B cell (primary cell): ENCODE measurements at regions of chr17 and their contacts with region 1.

Region 1: DNA sequence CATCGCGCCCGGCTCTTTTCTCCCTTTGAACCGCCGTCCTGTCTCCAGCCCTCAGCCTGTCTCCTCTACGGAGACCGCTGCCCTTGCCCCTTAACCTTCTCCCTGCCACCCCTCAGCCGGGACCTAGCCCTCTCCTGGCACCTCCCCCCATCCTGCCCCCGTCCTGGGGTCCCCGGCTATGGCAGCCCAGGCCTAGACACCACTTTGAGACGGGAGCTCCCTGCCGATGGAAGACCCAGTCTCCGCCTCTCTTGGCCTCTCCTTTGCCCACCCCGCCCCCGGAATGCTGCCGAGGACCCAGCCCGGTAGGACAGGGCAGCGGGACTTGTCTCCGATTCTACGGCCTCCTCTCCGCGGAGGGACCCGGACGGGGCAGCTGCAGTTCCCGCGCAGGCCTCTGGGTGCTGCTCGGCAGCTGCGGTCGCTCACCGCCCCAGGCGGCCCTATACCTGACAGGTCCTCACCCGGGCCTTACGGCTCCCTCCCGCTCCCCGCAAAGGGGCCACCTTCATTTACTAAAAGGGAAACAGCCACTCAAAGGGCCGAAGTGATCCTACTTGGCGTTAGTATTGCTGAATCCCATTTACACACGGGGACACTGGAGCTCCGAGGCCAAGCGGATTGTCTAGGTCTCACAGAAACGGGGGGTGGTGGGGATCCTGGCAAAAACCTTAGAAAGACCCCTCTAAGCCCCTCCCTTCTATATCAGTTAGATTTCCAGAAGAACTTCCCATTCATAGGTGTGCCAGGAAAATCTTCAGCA is 32.6 kb upstream of the TAC4 start:
- DNase-seq: peak; percentile 78
- ATAC-seq: peak; percentile 95
- H3K4me3 ChIP-seq: peak overlapping the region in 2 of 5 experiments; percentile 9 to 16
- H3K4me3 Mint-ChIP-seq: peak overlapping the region; percentile 56
- H3K27ac ChIP-seq: no peak overlapping the region
- H3K27ac Mint-ChIP-seq: no peak overlapping the region
- H3K4me1 ChIP-seq: peaks cover 9 to 10% of the 10 kb centered on the region in 2 donors
- H3K4me1 Mint-ChIP-seq: peaks cover 6% of the 10 kb centered on the region
- H3K27me3 ChIP-seq: peaks cover 0 to 46% (median 18%) of the 10 kb centered on the region in 4 experiments
- H3K27me3 Mint-ChIP-seq: peaks cover 53% of the 10 kb centered on the region
- CTCF ChIP-seq: peak; percentile 97

Region 2: GRCh38 chr17:49861150-49861892 is 19.2 kb before region 1 on chr17:
- CTCF ChIA-PET with region 1: interaction called, 4 read pairs
- POLR2A ChIA-PET with region 1: no interaction called
- intact Hi-C with region 1: loop called (anchors 1 kb)
- DNase-seq: peak; percentile 78
- ATAC-seq: peak; percentile 76
- H3K4me3 ChIP-seq: no peak overlapping the region
- H3K4me3 Mint-ChIP-seq: no peak overlapping the region
- H3K27ac ChIP-seq: no peak overlapping the region
- H3K27ac Mint-ChIP-seq: no peak overlapping the region
- H3K4me1 ChIP-seq: no peaks in the 10 kb centered on the region
- H3K4me1 Mint-ChIP-seq: peaks cover 3% of the 10 kb centered on the region
- H3K27me3 ChIP-seq: peaks cover 0 to 31% (median 3%) of the 10 kb centered on the region in 4 experiments
- H3K27me3 Mint-ChIP-seq: peaks cover 34% of the 10 kb centered on the region
- CTCF ChIP-seq: peak; percentile 93

Region 3: DNA sequence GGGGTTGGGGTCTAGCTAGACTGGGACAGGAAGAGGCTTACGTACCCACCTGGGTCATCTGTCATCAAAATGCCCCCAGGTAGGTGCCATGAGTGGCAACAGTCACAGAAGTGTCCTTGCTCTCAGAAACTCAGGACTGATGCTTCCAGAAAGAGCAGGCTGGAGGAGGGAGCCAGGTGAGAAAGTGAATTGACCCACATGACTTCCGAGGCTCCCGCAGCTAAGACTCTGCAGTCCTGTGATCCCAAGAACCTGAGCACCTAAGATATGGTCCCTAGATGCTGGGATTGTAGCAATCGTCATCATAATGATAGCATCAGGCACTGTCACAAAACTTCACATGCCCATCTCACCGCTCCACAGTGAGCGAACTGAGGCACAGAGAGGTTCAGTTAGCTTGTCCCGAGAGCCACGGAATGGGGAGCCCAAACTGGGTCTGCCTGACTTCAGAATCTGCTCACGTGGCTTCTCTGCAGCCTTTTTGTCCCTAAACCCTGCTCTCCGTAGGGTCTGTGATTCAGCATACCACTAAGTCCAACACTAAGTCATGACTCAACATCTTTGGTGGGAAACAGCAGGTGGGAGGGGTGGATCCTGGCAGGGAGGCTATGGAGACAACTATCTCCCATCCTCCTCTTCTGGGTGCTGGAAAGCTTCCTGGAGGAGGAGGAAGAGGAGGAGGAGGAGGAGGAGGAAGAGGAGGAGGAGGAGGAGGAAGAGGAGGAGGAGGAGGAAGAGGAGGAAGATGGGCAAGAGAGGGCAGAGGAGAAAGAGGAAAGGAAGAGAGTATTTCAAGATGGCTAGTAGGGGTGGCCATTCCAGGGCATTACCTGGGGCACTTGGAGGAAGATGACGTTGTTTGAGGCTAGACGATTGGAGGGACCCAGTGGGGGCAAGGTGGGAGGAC is 33.0 kb after region 1 on chr17:
- CTCF ChIA-PET with region 1: no interaction called
- POLR2A ChIA-PET with region 1: no interaction called
- intact Hi-C with region 1: no loop called
- DNase-seq: no peak
- ATAC-seq: no peak
- H3K4me3 ChIP-seq: no peak overlapping the region
- H3K4me3 Mint-ChIP-seq: no peak overlapping the region
- H3K27ac ChIP-seq: no peak overlapping the region
- H3K27ac Mint-ChIP-seq: no peak overlapping the region
- H3K4me1 ChIP-seq: peaks cover 0 to 6% of the 10 kb centered on the region in 2 donors
- H3K4me1 Mint-ChIP-seq: peaks cover 2% of the 10 kb centered on the region
- H3K27me3 ChIP-seq: peaks cover 0 to 55% (median 12%) of the 10 kb centered on the region in 4 experiments
- H3K27me3 Mint-ChIP-seq: peaks cover 72% of the 10 kb centered on the region
- CTCF ChIP-seq: no peak

Region 4: DNA sequence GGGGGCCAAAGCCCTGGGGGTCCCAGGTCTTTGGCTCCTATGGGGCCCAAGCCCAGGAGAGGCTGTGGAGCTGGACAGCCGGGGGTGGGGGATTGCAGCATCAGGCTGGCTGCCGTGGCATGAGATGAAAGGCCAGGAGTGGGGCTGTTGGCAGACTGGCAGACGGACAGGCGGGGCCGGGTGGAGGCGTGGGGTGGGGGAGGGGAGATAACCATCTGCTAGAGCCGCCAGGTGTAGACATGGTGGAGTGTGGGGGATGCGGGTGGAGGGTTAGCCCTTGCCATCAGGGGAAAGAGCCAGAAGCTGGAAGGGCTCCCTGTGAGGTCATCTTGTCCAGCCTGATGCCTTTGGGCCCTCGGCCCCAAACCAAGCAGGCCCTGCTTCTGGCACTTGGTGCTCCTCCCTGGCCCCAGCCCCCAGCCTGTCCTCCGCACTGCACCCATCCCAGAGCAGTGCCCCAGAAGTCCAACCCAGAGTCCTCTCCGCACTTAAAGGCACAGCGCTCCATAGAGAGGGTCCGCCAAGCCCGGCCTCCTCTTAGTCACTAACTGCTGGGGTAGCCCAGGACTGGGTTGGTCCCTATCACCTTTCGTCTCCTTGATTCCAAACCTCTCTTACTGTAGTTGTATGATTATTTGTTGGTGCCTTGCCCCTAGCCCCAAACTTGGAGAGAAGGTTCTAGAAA is 55.2 kb after region 1 on chr17:
- CTCF ChIA-PET with region 1: no interaction called
- POLR2A ChIA-PET with region 1: no interaction called
- intact Hi-C with region 1: no loop called
- DNase-seq: no peak
- ATAC-seq: no peak
- H3K4me3 ChIP-seq: no peak overlapping the region
- H3K4me3 Mint-ChIP-seq: no peak overlapping the region
- H3K27ac ChIP-seq: no peak overlapping the region
- H3K27ac Mint-ChIP-seq: no peak overlapping the region
- H3K4me1 ChIP-seq: peaks cover 0 to 4% of the 10 kb centered on the region in 2 donors
- H3K4me1 Mint-ChIP-seq: peaks cover 2% of the 10 kb centered on the region
- H3K27me3 ChIP-seq: peaks cover 0 to 35% (median under 1%) of the 10 kb centered on the region in 4 experiments
- H3K27me3 Mint-ChIP-seq: peaks cover 35% of the 10 kb centered on the region
- CTCF ChIP-seq: no peak

Region 5: DNA sequence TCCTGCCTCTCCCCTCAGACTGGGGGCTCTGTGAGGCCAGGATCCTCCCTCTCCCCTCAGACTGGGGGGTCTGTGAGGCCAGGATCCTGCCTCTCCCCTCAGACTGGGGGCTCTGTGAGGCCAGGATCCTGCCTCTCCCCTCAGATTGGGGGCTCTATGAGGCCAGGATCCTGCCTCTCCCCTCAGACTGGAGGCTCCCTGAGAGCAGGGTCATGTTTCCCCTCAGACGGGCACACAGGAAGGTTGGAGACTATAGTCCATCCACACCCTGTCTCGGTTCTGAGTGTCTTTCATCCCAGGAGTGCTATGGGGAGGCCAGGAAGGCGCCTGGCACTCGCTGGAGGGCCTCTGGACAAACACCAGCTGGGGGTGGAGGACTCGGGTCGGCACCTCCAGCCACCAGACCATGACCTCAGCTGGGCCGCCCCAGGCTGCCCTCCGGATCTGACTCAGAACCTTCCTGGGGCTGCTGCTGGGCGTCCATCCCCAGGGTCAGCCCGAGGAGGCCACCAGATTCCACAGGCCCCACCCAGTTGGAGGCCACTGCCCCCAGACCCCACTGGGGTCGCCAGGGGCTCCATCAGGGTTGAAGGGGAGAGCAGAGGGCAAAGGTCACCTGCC is 66.6 kb after region 1 on chr17:
- CTCF ChIA-PET with region 1: no interaction called
- POLR2A ChIA-PET with region 1: no interaction called
- intact Hi-C with region 1: no loop called
- DNase-seq: no peak
- ATAC-seq: no peak
- H3K4me3 ChIP-seq: no peak overlapping the region
- H3K4me3 Mint-ChIP-seq: no peak overlapping the region
- H3K27ac ChIP-seq: no peak overlapping the region
- H3K27ac Mint-ChIP-seq: no peak overlapping the region
- H3K4me1 ChIP-seq: no peaks in the 10 kb centered on the region
- H3K4me1 Mint-ChIP-seq: no peaks in the 10 kb centered on the region
- H3K27me3 ChIP-seq: peaks cover 0 to 34% (median 3%) of the 10 kb centered on the region in 4 experiments
- H3K27me3 Mint-ChIP-seq: peaks cover 58% of the 10 kb centered on the region
- CTCF ChIP-seq: no peak